ENCODE measurements at regions of chr2 and their contacts with region 1.

Region 1: DNA sequence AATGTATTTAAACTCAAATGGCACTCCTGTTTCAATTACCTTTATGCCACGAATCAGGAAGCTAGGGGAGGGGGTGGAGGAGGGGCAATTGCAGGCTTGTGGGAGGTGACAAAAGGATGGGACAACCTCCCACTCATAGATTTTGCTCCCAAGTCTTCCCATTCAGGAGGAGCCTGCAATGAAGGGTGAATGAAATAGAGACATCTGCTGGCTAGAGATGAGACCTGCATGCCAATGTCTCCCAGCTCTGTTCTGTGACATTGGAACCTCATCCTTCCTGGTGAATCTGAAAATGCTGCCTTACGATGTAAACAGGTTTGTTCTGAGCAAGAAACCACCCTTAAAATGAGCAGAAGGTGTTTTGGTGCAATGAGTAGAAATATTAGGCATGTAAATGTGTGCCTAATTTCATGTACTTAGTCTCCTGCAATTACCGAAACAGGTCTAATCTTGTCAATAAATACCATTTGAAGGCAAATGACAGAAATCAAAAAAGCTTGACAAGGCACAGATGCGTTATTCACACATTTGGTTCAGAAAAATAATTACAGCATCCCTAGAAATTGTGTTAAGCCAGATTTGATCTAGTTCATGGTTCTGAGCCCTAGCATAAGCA is 2.7 kb upstream of the PID1 start:
- DNase-seq: peak; percentile 40 to 63 (median 50)
- H3K4me3 ChIP-seq: peak overlapping the region; percentile 27
- H3K27ac ChIP-seq: no peak overlapping the region
- H3K4me1 ChIP-seq: peaks cover 8% of the 10 kb centered on the region
- H3K27me3 ChIP-seq: no peaks in the 10 kb centered on the region
- CTCF ChIP-seq: peak; percentile 68 to 78 (median 75)
- EP300 ChIP-seq: no peak
- POLR2A ChIP-seq: no peak

Region 2: GRCh38 chr2:228699400-228699799 is 574.4 kb before region 1 on chr2:
- intact Hi-C with region 1: loop called in 3 of 4 experiments (anchors 5 to 10 kb)
- DNase-seq: no peak
- H3K4me3 ChIP-seq: no peak overlapping the region
- H3K27ac ChIP-seq: no peak overlapping the region
- H3K4me1 ChIP-seq: no peaks in the 10 kb centered on the region
- H3K27me3 ChIP-seq: no peaks in the 10 kb centered on the region
- CTCF ChIP-seq: peak in 1 of 3 donors; percentile 34
- EP300 ChIP-seq: no peak
- POLR2A ChIP-seq: no peak

Region 3: DNA sequence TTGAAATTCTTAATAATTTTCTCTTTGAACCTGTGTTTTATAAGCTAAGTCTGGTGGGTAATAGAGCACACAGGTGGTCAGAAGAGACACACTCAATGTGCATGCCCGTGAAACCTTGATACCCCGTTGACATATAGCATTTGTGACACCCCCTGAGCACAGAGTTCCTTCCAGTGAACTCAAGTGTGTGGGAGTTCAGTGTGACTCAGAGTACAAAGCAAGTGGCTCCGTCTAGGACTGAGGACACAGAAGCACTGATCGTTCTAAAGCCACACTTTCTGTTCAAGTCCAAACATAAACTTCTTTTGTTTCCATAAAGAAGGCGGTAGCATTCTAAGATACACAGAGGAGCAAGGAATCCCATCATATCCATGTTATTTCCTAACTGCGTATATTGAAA is 526.3 kb before region 1 on chr2:
- intact Hi-C with region 1: no loop called
- DNase-seq: no peak
- H3K4me3 ChIP-seq: no peak overlapping the region
- H3K27ac ChIP-seq: no peak overlapping the region
- H3K4me1 ChIP-seq: no peaks in the 10 kb centered on the region
- H3K27me3 ChIP-seq: no peaks in the 10 kb centered on the region
- CTCF ChIP-seq: no peak
- EP300 ChIP-seq: no peak
- POLR2A ChIP-seq: no peak

Region 4: GRCh38 chr2:229133155-229133772 is 140.6 kb before region 1 on chr2:
- intact Hi-C with region 1: loop called in 2 of 4 experiments (anchors 5 to 10 kb)
- DNase-seq: peak in 1 of 5 donors; percentile 38
- H3K4me3 ChIP-seq: no peak overlapping the region
- H3K27ac ChIP-seq: no peak overlapping the region
- H3K4me1 ChIP-seq: peaks cover 8% of the 10 kb centered on the region
- H3K27me3 ChIP-seq: no peaks in the 10 kb centered on the region
- CTCF ChIP-seq: peak in 2 of 3 donors; percentile 23 to 49
- EP300 ChIP-seq: no peak
- POLR2A ChIP-seq: no peak

Region 5: GRCh38 chr2:229220254-229220653 is 53.6 kb before region 1 on chr2:
- intact Hi-C with region 1: no loop called
- DNase-seq: no peak
- H3K4me3 ChIP-seq: no peak overlapping the region
- H3K27ac ChIP-seq: no peak overlapping the region
- H3K4me1 ChIP-seq: no peaks in the 10 kb centered on the region
- H3K27me3 ChIP-seq: no peaks in the 10 kb centered on the region
- CTCF ChIP-seq: no peak
- EP300 ChIP-seq: no peak
- POLR2A ChIP-seq: no peak

Region 6: DNA sequence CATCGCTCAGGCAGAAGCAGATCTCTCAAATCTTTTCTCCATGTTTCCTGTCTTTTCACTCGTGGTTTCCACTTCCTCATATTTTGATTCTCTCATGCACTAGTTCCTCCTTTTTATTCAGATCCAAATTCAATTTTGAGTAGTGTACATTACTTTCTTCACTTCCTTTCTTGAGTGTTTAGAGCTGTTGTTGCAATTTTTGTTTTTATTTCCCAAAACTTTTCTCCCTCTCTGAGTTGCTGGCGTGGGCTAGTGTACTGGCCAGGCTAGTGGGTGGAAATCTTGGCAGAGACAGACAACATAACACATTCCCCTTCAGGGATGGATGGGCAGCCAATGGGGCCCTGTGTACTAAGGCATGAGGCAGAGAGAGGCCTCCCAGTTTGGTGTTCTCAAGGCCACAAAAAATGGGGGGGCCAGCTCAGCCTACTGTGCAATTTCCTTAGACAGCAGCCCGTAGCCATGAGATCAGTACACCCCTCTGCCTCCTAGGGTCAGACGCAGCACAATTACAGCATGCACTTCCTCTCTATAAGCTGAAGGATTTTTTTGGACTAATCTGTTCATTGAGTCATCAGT is 142.4 kb after region 1 on chr2:
- intact Hi-C with region 1: loop called in 1 of 4 experiments (anchors 10 kb)
- DNase-seq: peak; percentile 84 to 95 (median 90)
- H3K4me3 ChIP-seq: no peak overlapping the region
- H3K27ac ChIP-seq: peak overlapping the region; percentile 55 to 91
- H3K4me1 ChIP-seq: peaks cover 19% of the 10 kb centered on the region
- H3K27me3 ChIP-seq: no peaks in the 10 kb centered on the region
- CTCF ChIP-seq: no peak
- EP300 ChIP-seq: no peak
- POLR2A ChIP-seq: peak; percentile 16

Region 7: DNA sequence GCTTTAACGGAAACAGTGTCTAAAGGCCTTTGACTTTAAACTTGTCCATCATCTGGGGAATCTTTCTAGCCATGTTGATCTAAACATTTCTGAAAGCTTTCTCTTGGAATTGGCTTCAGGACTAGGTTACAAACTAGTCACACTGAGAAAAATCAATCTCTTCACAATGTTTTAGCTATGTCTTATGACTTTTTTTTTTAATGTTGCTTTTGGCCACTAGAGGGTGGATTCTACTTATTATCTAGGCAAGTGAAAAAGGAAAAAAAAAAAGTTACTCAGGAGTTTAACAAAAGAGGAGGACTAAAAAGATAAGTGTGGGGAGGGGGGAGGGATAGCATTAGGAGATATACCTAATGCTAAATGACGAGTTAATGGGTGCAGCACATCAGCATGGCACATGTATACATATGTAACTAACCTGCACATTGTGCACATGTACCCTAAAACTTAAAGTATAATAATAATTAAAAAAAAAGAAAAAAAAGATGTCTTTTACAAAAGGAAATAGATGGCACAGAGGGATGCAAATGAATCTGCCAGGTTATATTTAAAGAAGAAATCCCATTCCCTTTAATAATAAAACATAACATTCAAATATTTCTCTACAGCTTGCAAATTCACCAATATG is 157.6 kb after region 1 on chr2:
- intact Hi-C with region 1: loop called in 1 of 4 experiments (anchors 10 kb)
- DNase-seq: no peak
- H3K4me3 ChIP-seq: no peak overlapping the region
- H3K27ac ChIP-seq: no peak overlapping the region
- H3K4me1 ChIP-seq: no peaks in the 10 kb centered on the region
- H3K27me3 ChIP-seq: no peaks in the 10 kb centered on the region
- CTCF ChIP-seq: peak in 2 of 3 donors; percentile 49 to 51
- EP300 ChIP-seq: no peak
- POLR2A ChIP-seq: no peak

Measured in ovary (tissue), 10 donors.